B cell (primary cell): ENCODE measurements at regions of chr17 and their contacts with region 1.

Region 1: DNA sequence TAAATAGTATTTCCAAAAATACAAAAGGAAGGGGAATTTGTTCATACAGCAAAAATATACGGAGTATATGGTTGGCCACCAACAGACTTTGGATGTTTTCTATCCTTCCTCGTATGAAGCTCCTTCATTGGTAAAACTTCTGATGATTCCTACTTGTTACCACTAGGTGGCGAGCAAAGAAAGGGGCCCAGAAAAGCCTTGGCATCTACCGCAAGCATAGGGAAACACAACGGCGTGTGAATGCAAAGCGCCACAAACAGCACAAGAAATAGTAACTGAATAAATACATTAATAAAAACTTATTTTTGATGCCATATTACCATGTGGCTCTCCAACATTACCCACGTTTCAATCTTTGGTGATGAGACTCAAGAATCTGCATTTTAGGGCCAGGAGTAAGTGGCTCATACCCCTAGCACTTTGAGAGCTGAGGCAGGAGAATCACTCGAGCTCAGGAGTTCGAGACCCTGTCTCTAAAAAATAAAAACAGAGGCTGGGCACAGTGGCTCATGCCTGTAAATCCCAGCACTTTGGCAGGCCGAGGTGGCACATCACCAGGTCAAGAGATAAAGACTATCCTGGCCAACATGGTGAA is 34.5 kb downstream of the YWHAE start:
- DNase-seq: peak; percentile 85
- ATAC-seq: peak; percentile 69
- H3K4me3 ChIP-seq: no peak overlapping the region
- H3K4me3 Mint-ChIP-seq: peak overlapping the region; percentile 39
- H3K27ac ChIP-seq: peak overlapping the region; percentile 42 to 62
- H3K27ac Mint-ChIP-seq: peak overlapping the region; percentile 59
- H3K4me1 ChIP-seq: peaks cover 36 to 51% of the 10 kb centered on the region in 2 donors
- H3K4me1 Mint-ChIP-seq: peaks cover 56% of the 10 kb centered on the region
- H3K27me3 ChIP-seq: no peaks in the 10 kb centered on the region
- H3K27me3 Mint-ChIP-seq: no peaks in the 10 kb centered on the region
- CTCF ChIP-seq: peak; percentile 89

Region 2: DNA sequence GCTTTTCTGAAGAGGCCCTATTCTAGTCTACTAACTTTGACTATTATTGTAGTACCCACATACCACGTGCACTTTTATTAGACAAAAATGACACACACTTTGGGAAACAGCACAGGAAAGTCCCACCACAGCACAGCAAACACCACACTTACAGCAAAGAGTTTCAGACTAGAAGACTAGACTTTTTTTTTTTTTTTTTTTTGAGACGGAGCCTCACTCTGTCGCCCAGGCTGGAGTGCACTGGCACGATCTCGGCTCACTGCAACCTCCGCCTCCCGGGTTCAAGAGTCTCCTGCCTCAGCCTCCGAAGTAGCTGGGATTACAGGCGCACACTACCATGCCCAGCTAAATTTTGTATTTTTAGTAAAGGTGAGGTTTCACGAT is 14.4 kb after region 1 on chr17:
- CTCF ChIA-PET with region 1: interaction called, 25 read pairs
- POLR2A ChIA-PET with region 1: no interaction called
- intact Hi-C with region 1: no loop called
- DNase-seq: peak; percentile 60
- ATAC-seq: peak; percentile 64
- H3K4me3 ChIP-seq: no peak overlapping the region
- H3K4me3 Mint-ChIP-seq: peak overlapping the region; percentile 81
- H3K27ac ChIP-seq: peak overlapping the region in 1 of 2 donors; percentile 70
- H3K27ac Mint-ChIP-seq: peak overlapping the region; percentile 64
- H3K4me1 ChIP-seq: peaks cover 56 to 65% of the 10 kb centered on the region in 2 donors
- H3K4me1 Mint-ChIP-seq: peaks cover 71% of the 10 kb centered on the region
- H3K27me3 ChIP-seq: no peaks in the 10 kb centered on the region
- H3K27me3 Mint-ChIP-seq: no peaks in the 10 kb centered on the region
- CTCF ChIP-seq: no peak

Region 3: GRCh38 chr17:1455797-1456599 is 90.5 kb after region 1 on chr17 and contains the start of gene CRK:
- CTCF ChIA-PET with region 1: interaction called, 13 read pairs
- POLR2A ChIA-PET with region 1: no interaction called
- intact Hi-C with region 1: loop called (anchors 1 kb)
- DNase-seq: peak; percentile 98
- ATAC-seq: peak; percentile 92
- H3K4me3 ChIP-seq: peak within 1 kb of the TSS; percentile 68 to 94 (median 82)
- H3K4me3 Mint-ChIP-seq: peak within 1 kb of the TSS; percentile 97
- H3K27ac ChIP-seq: peak within 1 kb of the TSS; percentile 79 to 97
- H3K27ac Mint-ChIP-seq: peak within 1 kb of the TSS; percentile 96
- H3K4me1 ChIP-seq: peaks cover 15 to 24% of the 10 kb centered on the region in 2 donors
- H3K4me1 Mint-ChIP-seq: peaks cover 47% of the 10 kb centered on the region
- H3K27me3 ChIP-seq: peaks cover 0 to 5% (median 0%) of the 10 kb centered on the region in 4 experiments
- H3K27me3 Mint-ChIP-seq: peaks cover 4% of the 10 kb centered on the region
- CTCF ChIP-seq: peak; percentile 7
- total RNA-seq, gene CRK: 31.9 and 36.4 TPM in 2 replicates

Region 4: GRCh38 chr17:1488030-1488863 is 122.7 kb after region 1 on chr17:
- CTCF ChIA-PET with region 1: interaction called, 11 read pairs
- POLR2A ChIA-PET with region 1: no interaction called
- intact Hi-C with region 1: no loop called
- DNase-seq: peak; percentile 88
- ATAC-seq: peak; percentile 32
- H3K4me3 ChIP-seq: peak overlapping the region; percentile 31 to 83 (median 68)
- H3K4me3 Mint-ChIP-seq: peak overlapping the region; percentile 87
- H3K27ac ChIP-seq: peak overlapping the region; percentile 81 to 90
- H3K27ac Mint-ChIP-seq: peak overlapping the region; percentile 91
- H3K4me1 ChIP-seq: peaks cover 36 to 65% of the 10 kb centered on the region in 2 donors
- H3K4me1 Mint-ChIP-seq: peaks cover 54% of the 10 kb centered on the region
- H3K27me3 ChIP-seq: peaks cover 0 to 5% (median 0%) of the 10 kb centered on the region in 4 experiments
- H3K27me3 Mint-ChIP-seq: no peaks in the 10 kb centered on the region
- CTCF ChIP-seq: no peak

Region 5: DNA sequence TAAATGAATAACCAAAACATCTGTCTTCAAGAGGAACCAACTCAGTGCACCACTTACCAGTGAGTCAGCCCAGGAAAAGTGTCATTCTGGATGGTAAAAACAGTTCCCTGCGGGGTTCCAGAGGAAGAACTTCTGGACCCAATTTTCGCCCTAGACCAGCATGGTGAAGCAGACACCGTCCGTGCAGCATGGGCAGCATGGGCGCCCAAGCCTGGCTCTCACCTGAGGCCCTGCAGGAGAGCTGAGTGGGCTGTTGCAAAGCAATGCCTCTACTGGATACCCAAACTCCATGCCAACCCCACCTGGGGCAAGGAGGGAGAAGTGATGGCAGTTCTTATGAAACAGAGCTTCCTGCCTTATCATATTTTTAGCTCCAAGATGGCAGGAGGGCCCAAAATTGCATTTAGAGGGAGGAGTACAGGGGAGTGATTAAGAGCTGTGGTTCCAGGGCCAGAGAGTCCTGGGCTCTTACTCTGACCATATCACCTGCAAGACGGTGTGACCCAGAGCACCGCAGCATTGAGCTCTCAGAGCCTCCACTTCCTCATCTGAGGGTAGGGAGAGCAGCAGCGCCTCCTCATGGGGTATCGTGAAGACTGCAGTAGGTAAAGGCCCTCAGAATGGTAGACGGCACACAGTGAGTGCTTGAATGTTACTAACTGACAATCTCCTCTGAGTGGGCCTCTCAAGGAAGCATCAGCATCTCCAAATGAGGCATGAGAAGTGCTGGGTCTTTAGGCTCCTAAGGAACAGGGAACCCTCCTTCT is 167.5 kb after region 1 on chr17:
- CTCF ChIA-PET with region 1: interaction called, 41 read pairs
- POLR2A ChIA-PET with region 1: no interaction called
- intact Hi-C with region 1: loop called (anchors 1 kb)
- DNase-seq: peak; percentile 74
- ATAC-seq: peak; percentile 93
- H3K4me3 ChIP-seq: no peak overlapping the region
- H3K4me3 Mint-ChIP-seq: no peak overlapping the region
- H3K27ac ChIP-seq: no peak overlapping the region
- H3K27ac Mint-ChIP-seq: no peak overlapping the region
- H3K4me1 ChIP-seq: peaks cover 0 to 5% of the 10 kb centered on the region in 2 donors
- H3K4me1 Mint-ChIP-seq: peaks cover 6% of the 10 kb centered on the region
- H3K27me3 ChIP-seq: no peaks in the 10 kb centered on the region
- H3K27me3 Mint-ChIP-seq: no peaks in the 10 kb centered on the region
- CTCF ChIP-seq: peak; percentile 72